Activated CD4-positive, alpha-beta T cell treated with anti-CD3 and anti-CD28 coated beads, Interleukin-2, amount 10 ng/mL, durations not matched to agents 24 days and 14 days (primary cell): ENCODE measurements at regions of chr11 and their contacts with region 1.

Region 1: DNA sequence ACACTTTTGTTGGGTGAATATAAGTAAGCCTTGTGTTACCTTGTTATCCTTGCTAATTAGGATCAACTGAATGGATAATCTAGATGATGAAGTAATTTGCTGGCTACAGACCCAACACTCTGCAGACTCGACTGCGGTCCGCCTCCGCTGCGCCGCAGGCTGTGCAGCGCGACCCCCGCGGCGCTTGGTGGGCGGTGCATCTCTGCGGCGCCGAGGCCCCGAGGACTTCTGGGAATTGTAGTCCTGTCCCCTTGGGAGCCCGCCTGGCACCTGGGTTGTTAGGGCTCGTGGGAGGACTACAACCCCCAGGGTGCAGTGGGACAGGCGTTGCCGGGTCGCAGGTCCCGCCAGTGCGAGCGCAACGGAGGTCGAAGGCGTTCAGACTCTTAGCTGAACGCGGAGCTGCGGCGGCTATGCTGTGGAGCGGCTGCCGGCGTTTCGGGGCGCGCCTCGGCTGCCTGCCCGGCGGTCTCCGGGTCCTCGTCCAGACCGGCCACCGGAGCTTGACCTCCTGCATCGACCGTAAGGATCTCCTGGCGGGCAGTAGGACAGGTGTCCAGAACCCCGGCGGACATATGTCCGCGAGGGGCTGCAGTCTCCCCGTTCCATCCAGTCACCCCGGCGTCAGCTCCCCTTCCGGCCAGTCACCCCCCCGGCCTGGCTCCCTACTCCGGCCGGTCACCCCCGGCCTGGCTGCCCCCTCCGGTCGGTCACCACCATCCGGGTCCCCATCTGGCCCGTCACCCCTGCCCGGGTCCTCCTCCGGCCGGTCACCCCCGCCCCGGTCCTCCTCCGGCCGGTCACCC is at the starts of genes ACAD8 and THYN1:
- DNase-seq: peak; percentile 98
- H3K4me3 Mint-ChIP-seq: peak within 1 kb of the TSS; percentile 94
- H3K27ac Mint-ChIP-seq: peak within 1 kb of the TSS; percentile 88
- H3K4me1 Mint-ChIP-seq: peaks cover 29% of the 10 kb centered on the region
- H3K27me3 Mint-ChIP-seq: no peaks in the 10 kb centered on the region
- total RNA-seq, gene ACAD8: 26.0 and 26.7 TPM in 2 replicates
- total RNA-seq, gene THYN1: 61.6 and 69.1 TPM in 2 replicates

Region 2: GRCh38 chr11:134150195-134150903 is 103.0 kb before region 1 on chr11:
- intact Hi-C with region 1: no loop called
- DNase-seq: no peak
- H3K4me3 Mint-ChIP-seq: no peak overlapping the region
- H3K27ac Mint-ChIP-seq: no peak overlapping the region
- H3K4me1 Mint-ChIP-seq: peaks cover 3% of the 10 kb centered on the region
- H3K27me3 Mint-ChIP-seq: no peaks in the 10 kb centered on the region

Region 3: DNA sequence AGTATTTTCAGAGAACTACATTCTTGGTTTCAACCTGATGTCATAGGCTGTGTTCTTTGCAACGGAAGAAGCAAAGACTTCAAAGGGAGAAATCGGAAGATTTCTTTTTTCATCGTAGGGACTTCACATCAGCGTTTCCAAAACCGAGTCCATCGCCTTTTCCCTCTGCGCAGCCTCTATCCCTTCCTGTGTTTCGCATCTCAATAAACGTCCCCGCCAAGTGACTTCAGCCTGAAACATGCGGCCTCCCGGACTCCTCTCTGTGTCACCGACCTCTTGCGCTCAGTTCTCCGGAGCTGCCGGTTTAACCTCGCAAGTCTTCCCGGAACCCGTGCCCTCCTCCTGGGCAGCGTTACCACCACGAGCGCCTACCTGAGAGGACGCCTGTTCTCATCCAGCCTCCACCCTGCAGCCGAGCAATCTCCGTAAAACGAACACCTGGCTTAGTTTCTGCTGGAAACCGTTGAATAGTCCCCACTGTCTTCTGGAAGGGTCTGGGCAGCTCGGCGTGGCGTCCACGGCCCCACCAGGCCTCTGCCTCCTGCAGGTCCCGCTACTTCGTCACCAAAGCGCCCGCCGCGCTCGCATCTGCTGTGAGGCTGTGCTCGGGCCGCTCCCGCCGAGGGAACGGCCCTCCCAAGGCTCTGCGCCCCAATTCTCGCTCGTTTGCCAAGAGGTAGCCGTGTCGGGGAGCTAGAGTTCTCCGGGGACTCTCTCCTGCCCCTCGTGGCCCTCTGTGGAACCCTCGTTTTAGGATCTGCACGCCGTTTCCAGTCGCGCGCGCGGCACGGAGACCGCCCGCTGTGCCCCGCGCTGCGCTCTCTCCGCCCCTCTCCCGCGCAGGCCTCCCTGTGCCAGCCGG is 22.4 kb after region 1 on chr11 and contains the start of gene GLB1L3:
- intact Hi-C with region 1: loop called (anchors 1 kb)
- DNase-seq: peak; percentile 96
- H3K4me3 Mint-ChIP-seq: peak within 1 kb of the TSS; percentile 98
- H3K27ac Mint-ChIP-seq: peak within 1 kb of the TSS; percentile 93
- H3K4me1 Mint-ChIP-seq: peaks cover 46% of the 10 kb centered on the region
- H3K27me3 Mint-ChIP-seq: peaks cover 3% of the 10 kb centered on the region
- total RNA-seq, gene GLB1L3: 16.5 and 17.0 TPM in 2 replicates

Region 4: DNA sequence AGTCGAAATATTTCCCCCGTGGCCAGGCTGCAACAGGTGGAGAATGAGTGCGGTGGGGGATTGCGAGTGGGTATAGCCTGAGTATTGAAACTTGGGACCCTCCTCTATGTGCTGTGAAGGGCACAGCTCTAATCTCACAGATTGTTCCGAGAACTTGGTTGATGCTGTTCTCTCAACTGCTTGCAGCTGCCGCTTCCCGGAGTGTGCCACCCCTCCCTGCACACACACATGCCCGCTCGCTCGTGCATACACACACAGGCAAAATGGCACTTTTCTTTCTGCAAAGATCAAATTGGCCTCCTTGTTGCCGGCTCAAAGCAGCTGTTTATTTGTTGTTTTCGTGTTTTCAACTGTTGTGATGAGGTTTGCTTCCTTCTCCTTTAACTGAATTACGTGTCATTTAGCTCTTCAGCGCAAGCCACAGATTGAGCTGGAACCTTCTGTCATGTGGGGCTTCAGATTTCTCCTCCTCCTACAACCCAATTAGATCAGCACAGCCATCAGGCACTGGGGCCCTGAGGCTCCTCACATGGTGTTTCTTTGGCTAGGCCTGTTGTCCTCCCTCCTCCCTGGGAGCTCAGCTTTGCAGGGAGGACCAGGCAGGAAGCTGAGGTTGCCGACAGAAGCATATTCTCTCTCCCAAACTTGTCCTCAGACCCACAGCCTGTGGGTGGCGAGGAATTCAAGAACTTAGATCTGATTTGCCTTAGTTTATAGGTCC is 172.6 kb after region 1 on chr11:
- intact Hi-C with region 1: no loop called
- DNase-seq: no peak
- H3K4me3 Mint-ChIP-seq: no peak overlapping the region
- H3K27ac Mint-ChIP-seq: no peak overlapping the region
- H3K4me1 Mint-ChIP-seq: no peaks in the 10 kb centered on the region
- H3K27me3 Mint-ChIP-seq: peaks cover 22% of the 10 kb centered on the region